Breast epithelium (tissue), 4 donors: ENCODE measurements at regions of chr18 and their contacts with region 1.

Region 1: GRCh38 chr18:31973929-31974546 is 31.1 kb upstream of the TRAPPC8 start:
- DNase-seq: no peak
- H3K4me3 ChIP-seq: no peak overlapping the region
- H3K27ac ChIP-seq: no peak overlapping the region
- H3K4me1 ChIP-seq: no peaks in the 10 kb centered on the region
- H3K27me3 ChIP-seq: no peaks in the 10 kb centered on the region
- CTCF ChIP-seq: no peak
- POLR2A ChIP-seq: no peak

Region 2: GRCh38 chr18:31546476-31546875 is 427.6 kb before region 1 on chr18:
- intact Hi-C with region 1: no loop called
- DNase-seq: no peak
- H3K4me3 ChIP-seq: no peak overlapping the region
- H3K27ac ChIP-seq: no peak overlapping the region
- H3K4me1 ChIP-seq: no peaks in the 10 kb centered on the region
- H3K27me3 ChIP-seq: no peaks in the 10 kb centered on the region
- CTCF ChIP-seq: no peak
- POLR2A ChIP-seq: no peak

Region 3: DNA sequence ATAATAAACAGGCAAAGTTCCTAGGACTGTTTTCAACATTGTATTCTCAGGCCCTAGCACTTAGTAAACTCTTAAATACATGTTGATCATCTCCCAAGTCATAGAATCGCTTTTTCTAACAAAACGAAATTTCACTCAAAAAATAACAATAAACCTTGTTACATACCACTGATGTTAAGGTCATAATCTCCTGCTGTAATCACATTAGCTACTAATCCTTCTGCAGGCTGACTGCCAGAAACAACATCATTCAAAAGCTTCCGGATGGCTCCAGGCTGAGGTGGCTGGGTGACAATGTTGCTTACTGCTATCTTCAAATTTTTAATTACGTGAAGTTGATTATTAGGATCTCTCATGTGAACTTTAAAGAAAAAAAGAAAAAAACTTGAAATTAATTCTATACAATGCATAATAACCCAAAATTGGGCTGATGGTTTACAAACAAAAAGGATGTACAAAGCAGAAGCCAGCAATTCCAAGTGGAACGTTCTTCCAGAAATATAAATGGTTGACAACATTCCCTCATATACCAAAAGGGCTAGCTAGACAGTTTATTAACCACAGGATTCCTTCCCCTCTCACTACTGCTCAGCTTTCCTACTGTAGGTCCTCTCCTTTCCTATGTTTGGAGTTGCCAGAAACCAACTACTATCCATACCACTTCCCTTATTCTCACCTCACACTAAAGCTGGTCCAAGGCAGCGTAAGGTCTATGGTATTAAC is 42.7 kb before region 1 on chr18:
- intact Hi-C with region 1: loop called (anchors 2 kb)
- DNase-seq: no peak
- H3K4me3 ChIP-seq: no peak overlapping the region
- H3K27ac ChIP-seq: no peak overlapping the region
- H3K4me1 ChIP-seq: no peaks in the 10 kb centered on the region
- H3K27me3 ChIP-seq: no peaks in the 10 kb centered on the region
- CTCF ChIP-seq: no peak
- POLR2A ChIP-seq: no peak

Region 4: DNA sequence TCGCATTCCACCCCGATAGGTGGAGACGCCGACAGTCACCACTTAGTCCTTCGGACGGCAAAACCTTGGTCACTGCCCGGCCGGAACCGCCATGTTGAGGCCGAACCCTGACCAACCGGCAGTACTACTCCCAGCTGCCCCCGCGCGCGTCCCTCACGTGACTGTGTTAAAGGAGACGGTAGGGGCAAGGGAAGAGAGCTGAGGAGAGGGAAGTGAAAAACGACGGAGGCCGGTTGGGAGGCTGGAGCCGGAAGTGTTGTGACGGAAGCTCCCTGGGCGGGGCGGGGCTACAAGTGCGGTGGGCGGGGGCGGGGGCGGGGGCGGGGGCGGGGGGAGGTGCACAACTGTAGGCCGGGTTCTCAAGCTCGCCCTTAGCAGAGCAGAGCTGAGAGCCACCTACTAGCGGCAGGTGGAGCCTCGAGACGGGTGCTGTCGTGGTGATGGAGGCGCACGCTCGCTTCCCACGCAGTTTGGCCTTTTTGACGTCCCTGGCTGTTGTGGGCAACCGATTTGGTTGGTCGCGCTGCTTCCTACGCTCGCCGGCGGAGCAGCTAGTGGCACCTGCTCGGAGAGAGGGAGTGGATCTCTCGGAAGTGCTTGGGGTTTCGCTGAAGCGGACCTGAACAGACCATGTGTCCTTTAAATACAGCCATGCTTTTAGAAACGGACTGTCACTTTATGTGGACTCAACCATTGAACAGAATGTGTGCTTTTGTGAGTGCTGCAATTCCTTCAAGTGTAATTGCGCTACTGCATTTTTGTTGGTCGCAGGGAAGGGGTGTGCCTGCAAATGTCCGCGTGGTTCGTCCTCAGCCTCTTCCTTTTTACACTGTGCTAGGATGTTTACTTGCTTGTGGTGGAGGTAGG is 30.8 kb before region 1 on chr18 and contains the start of gene TRAPPC8:
- intact Hi-C with region 1: no loop called
- DNase-seq: peak; percentile 97 to 98
- H3K4me3 ChIP-seq: peak within 1 kb of the TSS; percentile 68 to 99 (median 82)
- H3K27ac ChIP-seq: peak within 1 kb of the TSS; percentile 93 to 96
- H3K4me1 ChIP-seq: peaks cover 3 to 6% of the 10 kb centered on the region in 2 donors
- H3K27me3 ChIP-seq: no peaks in the 10 kb centered on the region
- CTCF ChIP-seq: peak in 1 of 3 donors; percentile 8
- POLR2A ChIP-seq: no peak
- total RNA-seq, gene TRAPPC8: 39.8 to 75.2 (median 49.8) TPM